Activated naive CD4-positive, alpha-beta T cell treated with anti-CD3 and anti-CD28 coated beads for 36 hours (primary cell): ENCODE measurements at regions of chr19 and their contacts with region 1.

Region 1: GRCh38 chr19:29610563-29611271 is 4.6 kb downstream of the POP4 start:
- DNase-seq: peak; percentile 92
- H3K4me3 Mint-ChIP-seq: no peak overlapping the region
- H3K27ac Mint-ChIP-seq: no peak overlapping the region
- H3K4me1 Mint-ChIP-seq: peaks cover 24% of the 10 kb centered on the region
- H3K27me3 Mint-ChIP-seq: no peaks in the 10 kb centered on the region

Region 2: GRCh38 chr19:29212648-29213573 is 397.8 kb before region 1 on chr19 and contains the start of gene UQCRFS1:
- CTCF ChIA-PET with region 1: no interaction called
- intact Hi-C with region 1: loop called (anchors 1 kb)
- DNase-seq: peak; percentile 97
- H3K4me3 Mint-ChIP-seq: peak within 1 kb of the TSS; percentile 96
- H3K27ac Mint-ChIP-seq: peak within 1 kb of the TSS; percentile 96
- H3K4me1 Mint-ChIP-seq: peaks cover 40% of the 10 kb centered on the region
- H3K27me3 Mint-ChIP-seq: no peaks in the 10 kb centered on the region
- total RNA-seq, gene UQCRFS1: 46.8 to 47.6 TPM

Region 3: GRCh38 chr19:29564574-29565005 is 46.1 kb before region 1 on chr19:
- CTCF ChIA-PET with region 1: no interaction called
- intact Hi-C with region 1: no loop called
- DNase-seq: no peak
- H3K4me3 Mint-ChIP-seq: no peak overlapping the region
- H3K27ac Mint-ChIP-seq: no peak overlapping the region
- H3K4me1 Mint-ChIP-seq: peaks cover 9% of the 10 kb centered on the region
- H3K27me3 Mint-ChIP-seq: peaks cover 28% of the 10 kb centered on the region

Region 4: DNA sequence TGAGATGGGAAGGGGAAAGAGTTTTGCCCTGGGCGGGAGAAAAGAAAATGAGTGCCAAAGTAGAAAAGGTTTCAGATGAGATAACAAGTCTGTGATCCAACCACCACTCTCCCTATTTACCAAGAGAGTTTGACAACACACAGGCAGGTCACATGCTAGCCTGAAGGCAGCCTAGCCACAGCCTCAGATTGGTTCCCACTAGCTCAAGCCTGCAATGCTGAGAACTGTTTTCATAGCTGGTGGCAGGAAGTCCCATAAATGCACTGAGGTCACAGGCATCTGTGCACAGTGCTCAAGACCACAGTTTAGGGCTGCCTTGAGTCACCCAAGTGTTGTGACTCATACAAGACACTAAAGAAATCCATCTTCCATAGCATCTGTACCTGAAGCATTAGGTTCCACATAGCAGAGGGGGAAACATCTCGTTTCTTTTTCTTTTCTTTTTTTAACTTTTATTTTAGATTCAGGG is 23.2 kb before region 1 on chr19:
- CTCF ChIA-PET with region 1: interaction called, 4 read pairs
- intact Hi-C with region 1: loop called (anchors 1 kb)
- DNase-seq: peak; percentile 84
- H3K4me3 Mint-ChIP-seq: no peak overlapping the region
- H3K27ac Mint-ChIP-seq: peak overlapping the region; percentile 76
- H3K4me1 Mint-ChIP-seq: peaks cover 18% of the 10 kb centered on the region
- H3K27me3 Mint-ChIP-seq: peaks cover 39% of the 10 kb centered on the region

Region 5: DNA sequence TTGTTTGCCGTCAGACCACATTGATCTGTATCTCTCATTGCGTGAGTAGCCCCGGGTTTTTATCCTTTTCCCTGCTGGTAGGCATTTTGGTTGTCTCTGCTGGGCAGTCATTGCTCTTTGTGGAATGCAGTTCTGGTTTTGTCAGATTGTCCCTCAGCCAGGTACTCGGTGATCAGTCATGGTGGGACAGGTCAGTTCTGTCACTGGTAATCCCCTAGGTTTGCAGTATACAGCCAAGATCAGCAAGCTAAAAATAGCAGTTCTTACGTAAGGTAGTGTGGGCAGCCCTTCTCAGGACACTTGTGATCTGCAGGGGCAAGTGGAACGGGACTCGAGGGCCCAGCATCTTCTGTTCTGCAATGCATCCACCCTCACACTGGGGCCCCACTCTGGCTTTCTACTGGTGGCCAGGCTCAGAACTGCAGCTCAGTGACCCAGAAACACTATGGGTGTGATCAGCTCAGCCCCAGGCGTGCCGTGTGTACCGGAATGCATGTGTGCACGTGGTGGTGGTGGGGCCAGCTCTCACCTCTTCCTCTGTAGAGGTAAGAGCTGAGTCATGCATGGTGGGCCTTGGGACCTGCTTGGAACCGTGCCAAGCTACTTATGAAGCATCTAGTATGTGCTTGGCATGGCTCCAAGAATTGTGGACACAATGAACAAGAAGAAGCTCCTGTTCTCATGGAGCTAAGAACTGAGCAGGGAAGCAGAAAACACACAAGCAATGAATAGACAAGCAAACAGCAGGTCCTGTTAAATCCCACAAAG is 60.9 kb after region 1 on chr19:
- CTCF ChIA-PET with region 1: interaction called, 102 read pairs
- intact Hi-C with region 1: loop called (anchors 1 kb)
- DNase-seq: peak; percentile 96
- H3K4me3 Mint-ChIP-seq: peak overlapping the region; percentile 69
- H3K27ac Mint-ChIP-seq: peak overlapping the region; percentile 96
- H3K4me1 Mint-ChIP-seq: peaks cover 91% of the 10 kb centered on the region
- H3K27me3 Mint-ChIP-seq: no peaks in the 10 kb centered on the region

Region 6: GRCh38 chr19:29694669-29695627 is 84.2 kb after region 1 on chr19:
- CTCF ChIA-PET with region 1: interaction called, 147 read pairs
- intact Hi-C with region 1: loop called (anchors 1 kb)
- DNase-seq: peak; percentile 88
- H3K4me3 Mint-ChIP-seq: no peak overlapping the region
- H3K27ac Mint-ChIP-seq: no peak overlapping the region
- H3K4me1 Mint-ChIP-seq: peaks cover 11% of the 10 kb centered on the region
- H3K27me3 Mint-ChIP-seq: no peaks in the 10 kb centered on the region

Region 7: GRCh38 chr19:29873024-29873800 is 262.5 kb after region 1 on chr19:
- CTCF ChIA-PET with region 1: interaction called, 3 read pairs
- intact Hi-C with region 1: loop called (anchors 5 kb)
- DNase-seq: peak; percentile 67
- H3K4me3 Mint-ChIP-seq: peak overlapping the region; percentile 53
- H3K27ac Mint-ChIP-seq: no peak overlapping the region
- H3K4me1 Mint-ChIP-seq: peaks cover 6% of the 10 kb centered on the region
- H3K27me3 Mint-ChIP-seq: peaks cover 13% of the 10 kb centered on the region